Activated naive CD4-positive, alpha-beta T cell treated with anti-CD3 and anti-CD28 coated beads for 36 hours (primary cell): ENCODE measurements at regions of chr11 and their contacts with region 1.

Region 1: DNA sequence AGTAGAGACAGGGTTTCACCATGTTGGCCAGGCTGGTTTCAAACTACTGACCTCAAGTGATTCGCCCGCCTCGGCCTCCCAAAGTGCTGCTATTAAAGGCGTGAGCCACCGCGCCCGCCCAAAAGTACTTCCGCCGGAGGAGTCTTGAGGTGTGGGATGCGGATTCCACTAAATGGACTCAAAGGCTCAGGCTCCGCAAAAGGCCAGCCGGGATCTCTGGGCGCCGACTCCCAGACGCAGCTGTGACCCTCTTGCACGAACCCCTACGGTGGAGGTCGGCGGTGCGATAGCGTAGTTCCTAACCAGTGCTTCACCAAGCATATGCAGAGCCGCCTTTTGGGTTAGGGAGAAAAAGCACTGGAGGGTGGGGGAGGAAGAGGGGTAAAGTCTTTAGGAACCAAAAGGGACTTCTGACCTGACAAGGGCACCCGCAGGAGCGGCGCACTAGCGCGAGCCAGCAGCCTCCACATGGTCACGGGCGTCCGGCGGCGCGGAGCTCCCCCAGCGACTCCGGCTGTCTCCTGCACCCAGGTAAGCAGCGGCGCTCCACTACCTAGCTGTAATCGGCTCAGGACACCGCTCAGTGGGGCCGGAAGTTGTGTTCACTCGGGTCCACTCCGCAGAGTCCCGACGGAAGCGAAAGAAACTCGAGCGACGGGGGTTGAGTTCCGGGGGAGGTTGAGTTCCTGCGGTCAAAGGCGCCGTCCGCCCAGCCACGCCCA is at the start of gene MRPL16:
- DNase-seq: peak; percentile 92
- H3K4me3 Mint-ChIP-seq: peak within 1 kb of the TSS; percentile 87
- H3K27ac Mint-ChIP-seq: peak within 1 kb of the TSS; percentile 82
- H3K4me1 Mint-ChIP-seq: peaks cover 18% of the 10 kb centered on the region
- H3K27me3 Mint-ChIP-seq: no peaks in the 10 kb centered on the region
- total RNA-seq, gene MRPL16: 59.5 to 63.2 TPM

Region 2: DNA sequence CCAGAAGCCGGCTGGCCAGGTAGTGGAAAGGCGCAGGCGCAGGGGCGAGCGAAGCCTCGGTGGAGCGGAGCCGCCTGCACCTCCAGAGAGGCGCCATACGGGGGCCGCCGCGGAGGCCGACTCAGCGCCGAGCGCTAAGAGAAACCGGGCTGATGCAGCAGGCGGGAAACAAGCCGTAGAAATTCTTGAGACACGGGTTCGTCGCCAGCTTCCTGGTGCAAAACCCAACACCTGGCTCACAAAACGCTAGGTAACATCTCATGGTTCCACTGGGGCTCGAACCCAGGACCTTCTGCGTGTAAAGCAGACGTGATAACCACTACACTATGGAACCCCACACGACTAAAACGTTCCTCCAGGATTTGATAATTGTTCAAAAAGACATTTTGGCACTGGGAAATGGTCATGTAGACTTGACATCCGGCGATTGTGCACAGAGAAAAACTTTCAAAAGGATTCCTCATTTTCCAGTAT is 259.9 kb before region 1 on chr11:
- CTCF ChIA-PET with region 1: no interaction called
- intact Hi-C with region 1: loop called (anchors 2 kb)
- DNase-seq: peak; percentile 93
- H3K4me3 Mint-ChIP-seq: peak overlapping the region; percentile 79
- H3K27ac Mint-ChIP-seq: peak overlapping the region; percentile 93
- H3K4me1 Mint-ChIP-seq: peaks cover 27% of the 10 kb centered on the region
- H3K27me3 Mint-ChIP-seq: peaks cover 5% of the 10 kb centered on the region

Region 3: GRCh38 chr11:59776210-59777066 is 33.9 kb before region 1 on chr11:
- CTCF ChIA-PET with region 1: no interaction called
- intact Hi-C with region 1: loop called (anchors 1 kb)
- DNase-seq: no peak
- H3K4me3 Mint-ChIP-seq: no peak overlapping the region
- H3K27ac Mint-ChIP-seq: no peak overlapping the region
- H3K4me1 Mint-ChIP-seq: peaks cover 22% of the 10 kb centered on the region
- H3K27me3 Mint-ChIP-seq: no peaks in the 10 kb centered on the region

Region 4: DNA sequence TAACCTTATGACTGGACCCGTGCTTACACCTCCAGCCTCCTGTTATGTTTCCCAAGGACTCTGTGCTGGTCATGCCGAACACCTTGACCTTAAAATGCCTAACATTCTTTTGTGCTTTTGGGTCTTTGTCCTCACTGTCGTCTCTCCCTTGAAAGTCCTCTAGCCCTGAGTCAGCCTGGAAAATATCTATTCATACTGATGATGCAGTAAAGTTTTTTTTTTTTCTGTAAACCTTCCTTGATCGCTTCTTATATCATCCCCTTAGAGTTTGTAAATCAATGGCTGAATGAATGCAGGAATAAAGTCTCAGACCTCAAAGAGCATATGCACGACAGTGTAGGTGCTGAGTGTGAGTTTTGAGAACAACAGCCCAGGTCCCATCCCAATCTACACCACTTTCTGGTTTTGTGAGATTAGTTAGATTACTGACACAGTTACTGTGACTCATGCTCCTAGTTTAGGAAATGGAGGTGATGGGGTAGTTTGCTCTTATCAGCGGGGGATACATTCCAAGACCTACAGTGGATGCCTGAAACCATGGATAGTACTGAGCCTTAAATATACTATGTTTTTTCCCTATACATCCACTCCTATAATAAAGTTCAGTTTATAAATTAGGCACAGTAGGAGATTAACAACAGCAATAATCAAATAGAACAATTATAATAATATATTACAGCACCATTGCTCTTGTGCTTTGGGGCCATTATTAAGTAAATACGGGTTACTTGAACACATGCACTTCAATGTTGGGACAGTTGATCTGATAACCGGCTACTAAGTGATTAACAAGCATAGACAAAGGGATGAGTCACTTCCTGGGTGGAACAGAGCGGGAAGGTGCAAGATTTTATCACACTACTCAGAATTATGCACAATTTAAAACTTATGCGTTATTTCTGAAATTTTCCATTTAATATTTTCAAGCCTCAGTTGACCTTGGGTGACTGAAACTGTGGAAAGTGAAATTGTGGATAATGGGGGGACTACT is 47.4 kb after region 1 on chr11:
- CTCF ChIA-PET with region 1: interaction called, 4 read pairs
- intact Hi-C with region 1: loop called (anchors 5 kb)
- DNase-seq: peak; percentile 25
- H3K4me3 Mint-ChIP-seq: no peak overlapping the region
- H3K27ac Mint-ChIP-seq: peak overlapping the region; percentile 54
- H3K4me1 Mint-ChIP-seq: peaks cover 12% of the 10 kb centered on the region
- H3K27me3 Mint-ChIP-seq: peaks cover 13% of the 10 kb centered on the region